WTC11 (cell line): ENCODE measurements at regions of chr22 and their contacts with region 1.

Region 1: GRCh38 chr22:31977141-31977841 is 33.0 kb downstream of the YWHAH start:
- DNase-seq: peak; percentile 94
- ATAC-seq: peak; percentile 98
- H3K4me3 Mint-ChIP-seq: no peak overlapping the region
- H3K27ac Mint-ChIP-seq: no peak overlapping the region
- H3K4me1 Mint-ChIP-seq: no peaks in the 10 kb centered on the region; the same call in 1 of the 2 replicates
- H3K27me3 Mint-ChIP-seq: no peaks in the 10 kb centered on the region
- CTCF ChIP-seq: peak; percentile 67

Region 2: GRCh38 chr22:31739795-31740201 is 237.5 kb before region 1 on chr22:
- CTCF ChIA-PET with region 1: no interaction called
- POLR2A ChIA-PET with region 1: no interaction called
- DNase-seq: no peak
- ATAC-seq: no peak
- H3K4me3 Mint-ChIP-seq: no peak overlapping the region
- H3K27ac Mint-ChIP-seq: no peak overlapping the region; the same call in 1 of the 2 replicates
- H3K4me1 Mint-ChIP-seq: no peaks in the 10 kb centered on the region
- H3K27me3 Mint-ChIP-seq: no peaks in the 10 kb centered on the region
- CTCF ChIP-seq: no peak

Region 3: DNA sequence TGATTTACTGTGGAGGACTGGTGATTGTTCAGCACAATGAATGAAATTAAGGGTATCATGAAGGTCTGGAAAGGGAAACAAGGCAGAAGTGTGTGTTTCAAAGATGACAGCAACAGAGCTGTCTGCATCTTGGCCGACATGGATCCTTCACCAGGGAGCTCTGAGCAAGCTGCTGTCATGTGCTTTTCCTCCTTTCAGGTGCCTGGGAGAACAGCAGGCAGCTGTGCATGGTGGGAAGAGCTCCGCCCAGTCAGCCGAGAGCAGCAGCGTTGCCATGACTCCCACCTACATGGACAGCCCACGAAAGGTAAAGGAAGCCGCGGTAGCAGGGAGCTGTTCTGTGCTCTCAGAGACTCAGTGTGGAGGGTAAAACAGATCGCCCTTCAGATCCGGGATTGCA is 120.0 kb before region 1 on chr22:
- CTCF ChIA-PET with region 1: interaction called, 10 read pairs
- POLR2A ChIA-PET with region 1: no interaction called
- DNase-seq: peak; percentile 76
- ATAC-seq: peak; percentile 100
- H3K4me3 Mint-ChIP-seq: no peak overlapping the region; the same call in 1 of the 2 replicates
- H3K27ac Mint-ChIP-seq: peak overlapping the region; percentile 37
- H3K4me1 Mint-ChIP-seq: peaks cover 10% of the 10 kb centered on the region
- H3K27me3 Mint-ChIP-seq: no peaks in the 10 kb centered on the region
- CTCF ChIP-seq: no peak

Region 4: DNA sequence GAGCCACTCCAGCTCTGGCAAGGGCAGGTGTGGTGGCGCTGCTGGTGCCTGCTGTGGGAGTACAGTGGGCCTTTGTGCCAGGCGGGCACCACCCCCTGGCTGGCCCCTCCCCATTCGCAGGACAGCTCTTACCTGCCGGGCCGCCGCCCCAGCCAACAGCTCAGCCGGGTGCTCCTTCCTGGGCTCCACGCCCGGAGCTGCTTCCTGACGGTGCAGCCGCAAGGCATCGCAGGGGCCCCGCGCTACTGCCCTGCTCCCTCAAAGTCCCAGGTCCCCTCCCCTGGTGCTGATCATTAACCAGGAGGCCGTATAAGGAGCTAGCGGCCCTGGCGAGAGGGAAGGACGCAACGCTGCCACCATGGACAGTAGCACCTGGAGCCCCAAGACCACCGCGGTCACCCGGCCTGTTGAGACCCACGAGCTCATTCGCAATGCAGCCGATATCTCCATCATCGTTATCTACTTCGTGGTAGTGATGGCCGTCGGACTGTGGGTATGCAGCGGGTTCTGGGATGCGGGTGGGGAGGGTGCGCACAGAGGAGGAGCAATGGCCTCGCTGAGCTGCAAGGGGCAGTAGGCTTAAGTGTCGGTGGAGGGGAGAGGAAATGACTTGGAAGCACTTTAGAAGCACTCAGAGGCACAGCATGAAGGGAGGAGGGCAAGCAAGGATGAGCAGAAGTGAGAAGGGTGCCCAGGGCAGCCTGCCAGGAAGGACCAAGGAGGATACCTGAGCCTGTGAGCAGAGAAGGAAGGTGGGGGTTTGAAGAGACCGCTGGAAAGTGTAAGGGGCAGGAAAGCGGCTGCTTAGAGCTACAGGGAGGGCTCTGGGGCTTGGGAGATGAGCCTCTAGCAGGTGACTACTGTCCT is 65.9 kb after region 1 on chr22 and contains the start of gene SLC5A1:
- CTCF ChIA-PET with region 1: interaction called, 16 read pairs
- POLR2A ChIA-PET with region 1: no interaction called
- DNase-seq: peak; percentile 12
- ATAC-seq: no peak; the same call in 1 of the 2 replicates
- H3K4me3 Mint-ChIP-seq: no peak within 1 kb of the TSS
- H3K27ac Mint-ChIP-seq: no peak within 1 kb of the TSS
- H3K4me1 Mint-ChIP-seq: peaks cover 3% of the 10 kb centered on the region; the same call in 1 of the 2 replicates
- H3K27me3 Mint-ChIP-seq: peaks cover 21% of the 10 kb centered on the region
- CTCF ChIP-seq: no peak
- total RNA-seq, gene SLC5A1: not detected in 3 replicates

Region 5: DNA sequence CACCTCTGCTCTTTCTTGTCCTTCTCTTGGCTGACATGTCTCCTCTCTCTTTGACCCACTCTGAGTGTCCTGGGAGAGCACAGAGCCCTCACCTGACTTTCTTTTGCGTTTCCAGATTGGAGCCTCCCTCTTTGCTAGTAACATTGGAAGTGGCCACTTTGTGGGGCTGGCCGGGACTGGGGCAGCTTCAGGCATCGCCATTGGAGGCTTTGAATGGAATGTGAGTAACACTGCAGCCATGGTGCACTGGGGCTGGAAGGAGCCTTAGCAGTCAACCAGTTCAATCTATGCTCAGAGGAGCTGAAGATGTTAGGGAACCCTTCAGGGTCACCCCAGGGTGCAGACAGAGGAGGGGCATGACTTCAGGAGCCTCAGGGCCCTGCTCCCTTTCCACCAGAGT is 89.5 kb after region 1 on chr22:
- CTCF ChIA-PET with region 1: interaction called, 22 read pairs
- POLR2A ChIA-PET with region 1: no interaction called
- DNase-seq: peak; percentile 23
- ATAC-seq: peak; percentile 32; the same call in 1 of the 2 replicates
- H3K4me3 Mint-ChIP-seq: no peak overlapping the region
- H3K27ac Mint-ChIP-seq: no peak overlapping the region
- H3K4me1 Mint-ChIP-seq: peaks cover 4% of the 10 kb centered on the region
- H3K27me3 Mint-ChIP-seq: peaks cover 9% of the 10 kb centered on the region
- CTCF ChIP-seq: no peak

Region 6: GRCh38 chr22:32127904-32128303 is 150.6 kb after region 1 on chr22:
- CTCF ChIA-PET with region 1: interaction called, 12 read pairs
- POLR2A ChIA-PET with region 1: no interaction called
- DNase-seq: peak; percentile 74
- ATAC-seq: peak; percentile 91
- H3K4me3 Mint-ChIP-seq: no peak overlapping the region
- H3K27ac Mint-ChIP-seq: no peak overlapping the region
- H3K4me1 Mint-ChIP-seq: peaks cover 11% of the 10 kb centered on the region
- H3K27me3 Mint-ChIP-seq: no peaks in the 10 kb centered on the region
- CTCF ChIP-seq: peak; percentile 43; the same call in 1 of the 2 replicates